Activated B cell treated with CpG ODN at 0.5 μM for 24 hours (primary cell): ENCODE measurements at regions of chr9 and their contacts with region 1.

Region 1: DNA sequence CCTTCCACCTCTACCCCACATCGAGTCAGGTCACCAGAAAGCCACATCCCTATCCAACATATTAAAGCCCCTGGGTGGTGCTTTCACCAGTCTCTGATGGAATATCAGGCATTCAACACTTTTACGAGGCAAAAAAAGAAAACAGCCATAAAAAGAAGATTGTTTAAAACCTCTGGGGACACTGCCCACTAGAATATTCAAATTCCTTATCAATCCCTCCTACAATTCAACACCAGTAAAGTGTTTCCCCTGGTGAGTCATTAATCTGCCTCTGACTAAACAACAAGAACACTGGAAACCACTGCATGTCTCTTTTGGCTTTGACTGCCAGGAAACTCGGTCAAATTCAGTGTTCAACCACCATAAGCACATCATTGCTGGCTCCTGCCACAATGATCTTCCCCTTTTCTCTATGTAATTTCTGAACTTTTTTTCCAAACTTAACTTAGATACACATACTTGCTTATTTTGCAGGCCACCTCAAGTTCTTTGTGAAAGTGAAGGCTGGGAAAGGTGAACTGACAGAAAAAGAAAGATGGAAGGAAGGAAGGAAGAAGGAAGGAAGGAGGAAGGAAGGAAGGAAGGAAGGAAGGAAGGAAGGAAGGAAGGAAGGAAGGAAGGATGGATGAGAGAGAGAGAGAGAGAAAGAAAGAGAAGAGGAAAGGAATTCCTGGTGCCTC is 105.3 kb downstream of the PAX5 start:
- DNase-seq: no peak
- ATAC-seq: peak; percentile 77
- H3K4me3 Mint-ChIP-seq: peak overlapping the region; percentile 70
- H3K27ac Mint-ChIP-seq: peak overlapping the region; percentile 91
- H3K4me1 Mint-ChIP-seq: peaks cover 86% of the 10 kb centered on the region
- H3K27me3 Mint-ChIP-seq: no peaks in the 10 kb centered on the region
- CTCF ChIP-seq: no peak

Region 2: DNA sequence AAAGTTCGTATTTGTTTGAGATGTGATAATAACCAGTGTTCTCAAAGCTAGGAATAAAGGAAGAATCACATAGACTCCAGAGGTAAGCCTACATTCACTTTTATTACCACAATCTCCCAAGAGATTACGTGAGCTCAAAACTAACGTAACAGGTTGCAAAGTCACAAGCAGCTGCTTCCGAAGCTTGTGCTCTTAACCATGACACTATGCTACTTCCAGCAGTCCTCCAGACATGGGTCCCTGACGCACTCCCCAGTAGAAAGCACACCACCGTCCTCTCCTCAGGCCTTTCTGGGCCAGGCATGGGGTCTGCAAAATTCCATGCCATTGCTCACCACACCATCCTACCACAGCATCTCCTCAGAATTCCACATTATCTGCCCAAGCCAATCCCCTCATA is 20.7 kb after region 1 on chr9:
- CTCF ChIA-PET with region 1: no interaction called
- POLR2A ChIA-PET with region 1: no interaction called
- intact Hi-C with region 1: loop called (anchors 2 kb)
- DNase-seq: peak; percentile 15
- ATAC-seq: peak; percentile 87
- H3K4me3 Mint-ChIP-seq: peak overlapping the region; percentile 61
- H3K27ac Mint-ChIP-seq: peak overlapping the region; percentile 88
- H3K4me1 Mint-ChIP-seq: peaks cover 81% of the 10 kb centered on the region
- H3K27me3 Mint-ChIP-seq: no peaks in the 10 kb centered on the region
- CTCF ChIP-seq: no peak

Region 3: DNA sequence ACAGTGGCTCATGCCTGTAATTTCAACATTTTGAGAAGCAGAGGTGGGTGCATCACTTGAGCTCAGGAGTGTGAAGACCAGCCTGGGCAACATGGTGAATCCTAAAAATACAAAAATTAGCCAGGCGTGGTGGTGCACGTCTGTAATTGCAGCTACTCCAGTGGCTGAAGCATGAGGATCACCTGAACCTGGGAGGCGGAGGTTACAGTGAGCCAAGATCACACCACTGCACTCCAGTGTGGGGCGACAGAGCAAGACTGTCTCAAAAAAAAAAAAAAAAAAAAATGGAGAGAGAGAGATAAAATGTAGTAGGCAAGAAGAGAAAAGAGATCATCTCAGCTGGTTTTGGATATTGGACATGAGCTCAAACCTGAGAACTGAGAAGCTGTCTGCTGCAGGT is 167.8 kb after region 1 on chr9:
- CTCF ChIA-PET with region 1: no interaction called
- POLR2A ChIA-PET with region 1: no interaction called
- intact Hi-C with region 1: no loop called
- DNase-seq: no peak
- ATAC-seq: no peak
- H3K4me3 Mint-ChIP-seq: no peak overlapping the region
- H3K27ac Mint-ChIP-seq: no peak overlapping the region
- H3K4me1 Mint-ChIP-seq: peaks cover 28% of the 10 kb centered on the region
- H3K27me3 Mint-ChIP-seq: no peaks in the 10 kb centered on the region
- CTCF ChIP-seq: no peak

Region 4: GRCh38 chr9:37174247-37174646 is 245.4 kb after region 1 on chr9:
- CTCF ChIA-PET with region 1: no interaction called
- POLR2A ChIA-PET with region 1: no interaction called
- intact Hi-C with region 1: no loop called
- DNase-seq: no peak
- ATAC-seq: no peak
- H3K4me3 Mint-ChIP-seq: no peak overlapping the region
- H3K27ac Mint-ChIP-seq: peak overlapping the region; percentile 9
- H3K4me1 Mint-ChIP-seq: peaks cover 42% of the 10 kb centered on the region
- H3K27me3 Mint-ChIP-seq: no peaks in the 10 kb centered on the region
- CTCF ChIP-seq: no peak

Region 5: GRCh38 chr9:37422289-37423104 is 493.7 kb after region 1 on chr9 and contains the start of gene GRHPR:
- CTCF ChIA-PET with region 1: no interaction called
- POLR2A ChIA-PET with region 1: no interaction called
- intact Hi-C with region 1: no loop called
- DNase-seq: peak; percentile 90
- ATAC-seq: peak; percentile 98
- H3K4me3 Mint-ChIP-seq: peak within 1 kb of the TSS; percentile 96
- H3K27ac Mint-ChIP-seq: peak within 1 kb of the TSS; percentile 93
- H3K4me1 Mint-ChIP-seq: peaks cover 40% of the 10 kb centered on the region
- H3K27me3 Mint-ChIP-seq: no peaks in the 10 kb centered on the region
- CTCF ChIP-seq: no peak
- total RNA-seq, gene GRHPR: 315 TPM in 2 replicates